Esophagus muscularis mucosa (tissue), 4 donors: ENCODE measurements at regions of chr20 and their contacts with region 1.

Region 1: DNA sequence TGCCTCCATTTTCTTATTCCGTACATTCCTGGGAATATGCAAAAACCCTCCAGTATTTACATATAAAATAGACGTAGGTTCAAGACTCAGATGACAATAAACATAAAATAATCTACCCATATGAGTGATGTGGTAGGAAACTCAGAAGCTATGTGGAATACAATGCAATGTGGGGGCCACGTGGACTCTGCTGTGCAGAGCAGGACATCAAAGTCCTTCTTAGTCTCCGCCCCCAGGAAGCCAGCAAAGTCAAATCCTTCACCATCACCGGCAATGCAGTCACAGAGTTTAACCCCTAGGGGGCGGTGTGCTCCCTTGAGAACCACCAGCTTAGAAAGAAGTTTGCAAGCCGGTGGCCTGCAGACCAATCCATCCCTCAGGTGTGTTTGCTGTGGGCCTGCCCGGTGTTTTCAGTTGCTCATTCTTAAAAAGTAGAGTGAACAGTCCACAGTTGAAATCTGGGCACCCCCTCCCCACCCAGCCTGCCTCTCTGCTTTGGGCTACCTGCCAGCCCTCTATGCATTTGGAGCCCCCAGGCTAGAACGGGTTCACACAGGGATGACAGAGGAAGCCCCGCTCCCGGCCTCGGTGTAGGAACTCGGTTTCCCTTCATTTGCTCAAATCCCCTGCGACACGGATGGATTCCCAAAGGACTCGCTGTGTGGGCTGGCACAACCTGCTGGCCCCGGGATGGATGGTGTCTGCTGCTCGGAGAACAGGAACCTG is 59.9 kb downstream of the SULF2 start:
- DNase-seq: peak; percentile 95
- H3K4me3 ChIP-seq: no peak overlapping the region
- H3K27ac ChIP-seq: no peak overlapping the region
- H3K4me1 ChIP-seq: peaks cover 4 to 39% (median 36%) of the 10 kb centered on the region in 4 donors
- H3K27me3 ChIP-seq: no peaks in the 10 kb centered on the region
- CTCF ChIP-seq: peak; percentile 89 to 94 (median 92)
- EP300 ChIP-seq: no peak
- POLR2A ChIP-seq: no peak

Region 2: DNA sequence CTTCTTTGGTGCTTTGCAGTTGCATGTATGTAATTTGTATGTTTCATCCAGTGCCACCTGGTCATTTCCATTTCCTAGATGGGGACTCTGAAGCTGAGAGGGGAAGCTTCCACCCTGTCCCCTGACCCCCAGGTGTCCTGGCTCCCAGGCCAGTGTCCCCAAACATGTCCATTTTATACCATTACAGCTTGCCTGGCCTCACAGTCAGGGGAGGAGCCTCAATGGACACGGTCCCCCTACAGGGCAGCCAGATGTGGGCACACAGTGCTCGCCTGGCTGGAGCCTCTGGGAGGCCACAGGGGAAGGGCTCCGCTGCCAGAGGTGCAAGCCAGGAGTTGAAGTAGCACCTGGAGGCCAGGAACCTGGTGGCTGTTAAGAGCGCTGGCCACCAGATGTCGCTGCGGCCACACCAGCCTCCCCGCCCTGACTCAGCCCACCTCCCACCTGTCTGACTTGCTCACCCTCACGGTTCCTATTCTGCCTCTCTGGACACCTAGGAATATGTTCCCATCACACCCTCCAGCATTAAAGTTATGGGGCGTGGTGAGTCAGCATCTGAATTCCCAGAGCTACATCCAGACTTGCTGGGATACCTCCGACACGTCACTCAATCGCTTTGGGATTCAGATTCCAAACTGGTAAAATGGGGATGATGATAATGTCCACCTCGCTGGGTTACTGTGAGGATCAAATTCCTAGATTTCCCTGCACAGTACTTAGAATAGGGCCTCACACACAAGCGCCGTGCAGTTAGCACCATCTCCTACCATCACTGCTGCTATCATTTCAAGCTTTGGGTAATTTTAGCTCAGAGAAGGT is 47.6 kb before region 1 on chr20:
- intact Hi-C with region 1: loop called (anchors 5 kb)
- DNase-seq: no peak
- H3K4me3 ChIP-seq: no peak overlapping the region
- H3K27ac ChIP-seq: no peak overlapping the region
- H3K4me1 ChIP-seq: peaks cover 17 to 34% (median 23%) of the 10 kb centered on the region in 4 donors
- H3K27me3 ChIP-seq: no peaks in the 10 kb centered on the region
- CTCF ChIP-seq: peak; percentile 71 to 85 (median 81)
- EP300 ChIP-seq: no peak
- POLR2A ChIP-seq: no peak

Region 3: DNA sequence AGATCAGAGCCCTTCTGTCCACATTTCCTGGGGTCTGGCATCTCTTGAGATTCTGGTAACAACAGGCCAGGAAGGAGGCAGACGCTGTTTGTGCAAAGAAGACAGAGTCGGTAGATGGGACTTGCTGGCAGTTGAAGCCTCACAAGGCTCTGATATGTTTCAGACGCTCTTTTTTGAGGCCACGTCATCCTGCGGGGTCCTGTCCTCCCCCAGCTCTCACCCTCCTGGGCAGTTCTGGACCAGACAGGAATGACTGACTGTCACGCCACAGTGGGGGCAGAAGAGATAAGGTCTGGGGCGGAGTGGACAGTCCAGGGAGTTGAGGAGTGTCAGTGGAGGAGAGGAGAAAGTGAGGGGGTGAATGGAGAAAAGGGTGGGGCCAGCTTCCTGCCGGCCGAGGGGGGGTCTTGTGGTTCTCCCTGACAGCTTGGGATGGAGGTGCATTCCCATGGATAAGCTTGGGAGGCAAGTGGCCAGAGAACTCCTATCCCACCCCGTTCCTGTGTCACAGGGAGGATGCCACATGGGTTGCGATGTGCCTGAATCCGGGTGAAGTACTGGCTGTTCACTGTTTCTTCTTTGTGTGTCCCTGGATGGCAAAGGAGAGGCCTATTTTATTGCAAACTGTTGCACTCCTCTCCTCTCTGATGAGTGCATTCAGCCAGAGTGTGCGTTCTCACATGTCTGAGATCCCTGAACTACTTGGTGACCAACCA is 147.1 kb after region 1 on chr20:
- intact Hi-C with region 1: no loop called
- DNase-seq: no peak
- H3K4me3 ChIP-seq: no peak overlapping the region
- H3K27ac ChIP-seq: no peak overlapping the region
- H3K4me1 ChIP-seq: peaks cover 0 to 7% (median 2%) of the 10 kb centered on the region in 4 donors
- H3K27me3 ChIP-seq: no peaks in the 10 kb centered on the region
- CTCF ChIP-seq: no peak
- EP300 ChIP-seq: no peak
- POLR2A ChIP-seq: no peak

Region 4: GRCh38 chr20:48295445-48295963 is 570.1 kb after region 1 on chr20:
- intact Hi-C with region 1: loop called (anchors 10 kb)
- DNase-seq: no peak
- H3K4me3 ChIP-seq: no peak overlapping the region
- H3K27ac ChIP-seq: peak overlapping the region; percentile 68 to 77 (median 76)
- H3K4me1 ChIP-seq: peaks cover 28 to 47% (median 39%) of the 10 kb centered on the region in 4 donors
- H3K27me3 ChIP-seq: no peaks in the 10 kb centered on the region
- CTCF ChIP-seq: peak; percentile 35 to 62 (median 48)
- EP300 ChIP-seq: no peak
- POLR2A ChIP-seq: no peak